Esophagus muscularis mucosa (tissue), 4 donors: ENCODE measurements at regions of chr7 and their contacts with region 1.

Region 1: GRCh38 chr7:55593515-55594318 is 21.4 kb upstream of the VOPP1 start:
- DNase-seq: peak; percentile 91
- H3K4me3 ChIP-seq: no peak overlapping the region
- H3K27ac ChIP-seq: no peak overlapping the region
- H3K4me1 ChIP-seq: peaks cover 0 to 10% (median 5%) of the 10 kb centered on the region in 4 donors
- H3K27me3 ChIP-seq: peaks cover 0 to 18% (median 0%) of the 10 kb centered on the region in 4 donors
- CTCF ChIP-seq: peak; percentile 59 to 91 (median 60)
- EP300 ChIP-seq: no peak
- POLR2A ChIP-seq: no peak

Region 2: GRCh38 chr7:55280031-55280454 is 313.7 kb before region 1 on chr7:
- intact Hi-C with region 1: loop called (anchors 5 kb)
- DNase-seq: peak; percentile 78
- H3K4me3 ChIP-seq: no peak overlapping the region
- H3K27ac ChIP-seq: no peak overlapping the region
- H3K4me1 ChIP-seq: no peaks in the 10 kb centered on the region
- H3K27me3 ChIP-seq: no peaks in the 10 kb centered on the region
- CTCF ChIP-seq: peak; percentile 57 to 68 (median 64)
- EP300 ChIP-seq: no peak
- POLR2A ChIP-seq: no peak

Region 3: DNA sequence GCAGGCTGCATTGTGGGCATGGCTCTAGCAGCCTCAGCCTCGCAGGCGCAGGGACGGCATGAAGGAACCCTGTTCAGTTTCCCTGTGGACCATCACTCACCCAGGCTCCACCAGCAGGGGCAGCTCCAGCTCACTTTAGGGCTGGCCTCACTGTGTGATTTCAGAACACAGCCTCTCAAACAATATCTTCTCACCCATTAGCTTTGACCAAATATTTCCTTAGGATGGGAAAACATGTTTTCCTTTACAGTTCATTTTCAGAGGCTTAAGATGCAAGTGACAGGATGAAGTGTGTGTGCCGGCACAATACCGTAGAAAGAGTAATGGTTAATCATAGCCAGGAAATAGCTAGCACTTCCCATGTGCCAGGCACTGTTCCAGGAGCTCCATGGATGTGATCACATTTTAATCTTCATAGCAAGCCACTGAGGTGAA is 170.4 kb before region 1 on chr7:
- intact Hi-C with region 1: loop called (anchors 10 kb)
- DNase-seq: no peak
- H3K4me3 ChIP-seq: no peak overlapping the region
- H3K27ac ChIP-seq: no peak overlapping the region
- H3K4me1 ChIP-seq: no peaks in the 10 kb centered on the region
- H3K27me3 ChIP-seq: no peaks in the 10 kb centered on the region
- CTCF ChIP-seq: no peak
- EP300 ChIP-seq: no peak
- POLR2A ChIP-seq: no peak